CD4-positive, alpha-beta memory T cell (primary cell): ENCODE measurements at regions of chr16 and their contacts with region 1.

Region 1: GRCh38 chr16:30844671-30845449 is 49.0 kb downstream of the BCL7C start:
- DNase-seq: peak; percentile 82 to 88 (median 85)
- H3K4me3 ChIP-seq: peak overlapping the region in 1 of 2 donors; percentile 0
- H3K4me3 Mint-ChIP-seq: peak overlapping the region; percentile 31 to 72 (median 58)
- H3K27ac ChIP-seq: no peak overlapping the region
- H3K27ac Mint-ChIP-seq: peak overlapping the region in 6 of 7 donors; percentile 6 to 81 (median 74)
- H3K4me1 ChIP-seq: peaks cover 6% of the 10 kb centered on the region
- H3K4me1 Mint-ChIP-seq: peaks cover 6 to 11% (median 10%) of the 10 kb centered on the region in 4 donors
- H3K27me3 ChIP-seq: no peaks in the 10 kb centered on the region
- H3K27me3 Mint-ChIP-seq: no peaks in the 10 kb centered on the region

Region 2: GRCh38 chr16:30786936-30787612 is 57.8 kb before region 1 on chr16 and contains the start of gene ZNF629:
- CTCF ChIA-PET with region 1: no interaction called
- POLR2A ChIA-PET with region 1: no interaction called
- intact Hi-C with region 1: no loop called
- DNase-seq: peak in 1 of 5 donors; percentile 12
- H3K4me3 ChIP-seq: peak within 1 kb of the TSS; percentile 36 to 44
- H3K4me3 Mint-ChIP-seq: peak within 1 kb of the TSS; percentile 78 to 85 (median 80)
- H3K27ac ChIP-seq: no peak within 1 kb of the TSS
- H3K27ac Mint-ChIP-seq: peak within 1 kb of the TSS in 3 of 7 donors; percentile 23 to 70 (median 35)
- H3K4me1 ChIP-seq: peaks cover 10% of the 10 kb centered on the region
- H3K4me1 Mint-ChIP-seq: peaks cover 5 to 26% (median 17%) of the 10 kb centered on the region in 4 donors
- H3K27me3 ChIP-seq: peaks cover 5% of the 10 kb centered on the region
- H3K27me3 Mint-ChIP-seq: peaks cover 3 to 5% of the 10 kb centered on the region in 2 donors
- total RNA-seq, gene ZNF629: 4.7 to 5.4 TPM

Region 3: GRCh38 chr16:30813821-30814189 is 31.1 kb before region 1 on chr16:
- CTCF ChIA-PET with region 1: interaction called, 10 read pairs
- POLR2A ChIA-PET with region 1: interaction called, 7 read pairs
- intact Hi-C with region 1: no loop called
- DNase-seq: no peak
- H3K4me3 ChIP-seq: peak overlapping the region; percentile 61 to 64
- H3K4me3 Mint-ChIP-seq: peak overlapping the region; percentile 88 to 93 (median 89)
- H3K27ac ChIP-seq: peak overlapping the region; percentile 57
- H3K27ac Mint-ChIP-seq: peak overlapping the region; percentile 81 to 91 (median 90)
- H3K4me1 ChIP-seq: peaks cover 13% of the 10 kb centered on the region
- H3K4me1 Mint-ChIP-seq: peaks cover 8 to 17% (median 12%) of the 10 kb centered on the region in 4 donors
- H3K27me3 ChIP-seq: no peaks in the 10 kb centered on the region
- H3K27me3 Mint-ChIP-seq: no peaks in the 10 kb centered on the region

Region 4: GRCh38 chr16:30874821-30875717 is 30.2 kb after region 1 on chr16:
- CTCF ChIA-PET with region 1: interaction called, 19 read pairs
- POLR2A ChIA-PET with region 1: interaction called, 30 read pairs
- intact Hi-C with region 1: no loop called
- DNase-seq: peak; percentile 85 to 89 (median 87)
- H3K4me3 ChIP-seq: peak overlapping the region; percentile 89 to 94
- H3K4me3 Mint-ChIP-seq: peak overlapping the region; percentile 92 to 99 (median 97)
- H3K27ac ChIP-seq: peak overlapping the region; percentile 84
- H3K27ac Mint-ChIP-seq: peak overlapping the region; percentile 91 to 99 (median 94)
- H3K4me1 ChIP-seq: peaks cover 23% of the 10 kb centered on the region
- H3K4me1 Mint-ChIP-seq: peaks cover 16 to 50% (median 31%) of the 10 kb centered on the region in 4 donors
- H3K27me3 ChIP-seq: no peaks in the 10 kb centered on the region
- H3K27me3 Mint-ChIP-seq: no peaks in the 10 kb centered on the region

Region 5: DNA sequence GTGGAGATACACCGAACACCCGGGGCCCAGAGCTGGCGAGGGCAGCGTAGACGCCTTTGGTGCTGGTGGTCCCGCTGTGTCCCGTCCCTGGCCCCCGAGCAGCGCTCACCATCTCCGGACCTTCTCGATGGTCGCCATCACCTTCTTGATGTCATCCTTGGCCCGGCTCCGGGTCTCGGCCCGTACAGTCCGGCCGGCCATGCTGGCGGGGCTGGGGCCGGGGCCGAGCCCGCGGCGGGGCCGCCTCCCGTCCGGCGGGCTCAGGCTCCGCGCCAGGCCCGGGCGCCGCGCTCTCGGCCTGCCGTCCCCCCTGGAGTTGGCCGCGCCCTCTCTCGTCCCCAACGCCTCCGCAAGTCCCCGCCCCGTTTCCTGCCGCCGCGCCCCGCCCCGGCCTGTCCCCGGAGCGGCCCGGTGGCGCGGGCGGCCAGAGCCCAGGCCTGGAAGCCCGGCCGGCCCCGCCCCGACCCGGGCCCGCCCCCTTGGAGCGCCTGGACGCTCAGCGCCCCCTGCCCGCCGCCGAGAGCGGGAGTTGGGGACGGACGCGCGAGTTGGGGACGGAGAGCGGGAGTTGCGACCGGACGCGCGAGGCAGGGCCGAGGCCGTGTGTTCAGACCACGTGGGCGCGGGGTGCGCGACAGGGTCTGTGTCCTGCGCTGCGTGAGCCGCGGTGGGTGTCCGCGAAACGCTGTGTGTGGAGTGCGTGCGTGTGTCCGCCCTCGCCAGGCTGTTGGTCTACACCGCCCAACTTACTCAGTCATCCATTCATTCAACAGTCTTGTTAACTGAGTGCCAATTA is 49.1 kb after region 1 on chr16 and contains the start of gene BCL7C:
- CTCF ChIA-PET with region 1: interaction called, 124 read pairs
- POLR2A ChIA-PET with region 1: interaction called, 4 read pairs
- intact Hi-C with region 1: no loop called
- DNase-seq: peak; percentile 63 to 82 (median 67)
- H3K4me3 ChIP-seq: peak within 1 kb of the TSS; percentile 52 to 75
- H3K4me3 Mint-ChIP-seq: peak within 1 kb of the TSS; percentile 85 to 95 (median 90)
- H3K27ac ChIP-seq: peak within 1 kb of the TSS; percentile 79
- H3K27ac Mint-ChIP-seq: peak within 1 kb of the TSS; percentile 85 to 97 (median 93)
- H3K4me1 ChIP-seq: peaks cover 35% of the 10 kb centered on the region
- H3K4me1 Mint-ChIP-seq: peaks cover 29 to 55% (median 43%) of the 10 kb centered on the region in 4 donors
- H3K27me3 ChIP-seq: no peaks in the 10 kb centered on the region
- H3K27me3 Mint-ChIP-seq: no peaks in the 10 kb centered on the region
- total RNA-seq, gene BCL7C: 25.5 to 27.3 TPM

Region 6: DNA sequence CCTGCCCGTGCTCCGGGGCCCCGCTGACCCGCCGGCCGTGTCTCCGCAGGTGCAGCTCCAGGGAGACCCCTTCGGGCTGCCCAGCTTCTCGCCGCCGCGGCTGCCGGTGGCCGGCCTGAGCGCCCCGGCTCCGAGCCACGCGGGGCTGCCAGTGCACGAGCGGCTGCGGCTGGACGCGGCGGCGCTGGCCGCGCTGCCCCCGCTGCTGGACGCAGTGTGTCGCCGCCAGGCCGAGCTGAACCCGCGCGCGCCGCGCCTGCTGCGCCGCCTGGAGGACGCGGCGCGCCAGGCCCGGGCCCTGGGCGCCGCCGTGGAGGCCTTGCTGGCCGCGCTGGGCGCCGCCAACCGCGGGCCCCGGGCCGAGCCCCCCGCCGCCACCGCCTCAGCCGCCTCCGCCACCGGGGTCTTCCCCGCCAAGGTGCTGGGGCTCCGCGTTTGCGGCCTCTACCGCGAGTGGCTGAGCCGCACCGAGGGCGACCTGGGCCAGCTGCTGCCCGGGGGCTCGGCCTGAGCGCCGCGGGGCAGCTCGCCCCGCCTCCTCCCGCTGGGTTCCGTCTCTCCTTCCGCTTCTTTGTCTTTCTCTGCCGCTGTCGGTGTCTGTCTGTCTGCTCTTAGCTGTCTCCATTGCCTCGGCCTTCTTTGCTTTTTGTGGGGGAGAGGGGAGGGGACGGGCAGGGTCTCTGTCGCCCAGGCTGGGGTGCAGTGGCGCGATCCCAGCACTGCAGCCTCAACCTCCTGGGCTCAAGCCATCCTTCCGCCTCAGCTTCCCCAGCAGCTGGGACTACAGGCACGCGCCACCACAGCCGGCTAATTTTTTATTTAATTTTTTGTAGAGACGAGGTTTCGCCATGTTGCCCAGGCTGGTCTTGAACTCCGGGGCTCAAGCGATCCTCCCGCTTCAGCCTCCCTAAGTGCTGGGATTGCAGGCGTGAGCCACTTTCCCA is 57.4 kb after region 1 on chr16:
- CTCF ChIA-PET with region 1: interaction called, 124 read pairs
- POLR2A ChIA-PET with region 1: interaction called, 50 read pairs
- intact Hi-C with region 1: loop called (anchors 1 kb)
- DNase-seq: peak; percentile 54 to 72 (median 58)
- H3K4me3 ChIP-seq: peak overlapping the region in 1 of 2 donors; percentile 68
- H3K4me3 Mint-ChIP-seq: peak overlapping the region; percentile 94 to 99 (median 96)
- H3K27ac ChIP-seq: peak overlapping the region; percentile 70
- H3K27ac Mint-ChIP-seq: peak overlapping the region; percentile 91 to 99 (median 98)
- H3K4me1 ChIP-seq: peaks cover 41% of the 10 kb centered on the region
- H3K4me1 Mint-ChIP-seq: peaks cover 19 to 47% (median 32%) of the 10 kb centered on the region in 4 donors
- H3K27me3 ChIP-seq: no peaks in the 10 kb centered on the region
- H3K27me3 Mint-ChIP-seq: no peaks in the 10 kb centered on the region

Region 7: DNA sequence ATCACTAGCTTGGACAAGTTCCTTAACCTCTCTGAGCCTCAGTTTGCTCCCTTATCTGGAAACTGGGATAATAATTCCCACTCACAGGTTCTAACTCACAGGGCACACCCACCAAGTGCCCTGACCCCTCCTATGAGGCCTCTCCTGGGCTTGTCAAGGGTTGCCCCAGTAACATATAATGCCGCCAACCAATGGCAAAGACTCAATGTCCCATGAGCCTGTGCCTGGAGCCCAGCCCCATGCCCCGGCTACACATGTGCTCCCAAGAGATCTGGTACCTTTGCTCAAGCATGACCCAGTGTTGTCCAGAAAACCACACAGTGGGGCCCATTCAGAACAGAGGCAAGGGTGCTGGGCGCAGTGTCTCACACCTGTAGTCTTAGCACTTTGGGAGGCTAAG is 70.0 kb after region 1 on chr16:
- CTCF ChIA-PET with region 1: interaction called, 80 read pairs
- POLR2A ChIA-PET with region 1: interaction called, 7 read pairs
- intact Hi-C with region 1: no loop called
- DNase-seq: no peak
- H3K4me3 ChIP-seq: no peak overlapping the region
- H3K4me3 Mint-ChIP-seq: no peak overlapping the region
- H3K27ac ChIP-seq: no peak overlapping the region
- H3K27ac Mint-ChIP-seq: no peak overlapping the region
- H3K4me1 ChIP-seq: no peaks in the 10 kb centered on the region
- H3K4me1 Mint-ChIP-seq: no peaks in the 10 kb centered on the region
- H3K27me3 ChIP-seq: no peaks in the 10 kb centered on the region
- H3K27me3 Mint-ChIP-seq: no peaks in the 10 kb centered on the region

Region 8: DNA sequence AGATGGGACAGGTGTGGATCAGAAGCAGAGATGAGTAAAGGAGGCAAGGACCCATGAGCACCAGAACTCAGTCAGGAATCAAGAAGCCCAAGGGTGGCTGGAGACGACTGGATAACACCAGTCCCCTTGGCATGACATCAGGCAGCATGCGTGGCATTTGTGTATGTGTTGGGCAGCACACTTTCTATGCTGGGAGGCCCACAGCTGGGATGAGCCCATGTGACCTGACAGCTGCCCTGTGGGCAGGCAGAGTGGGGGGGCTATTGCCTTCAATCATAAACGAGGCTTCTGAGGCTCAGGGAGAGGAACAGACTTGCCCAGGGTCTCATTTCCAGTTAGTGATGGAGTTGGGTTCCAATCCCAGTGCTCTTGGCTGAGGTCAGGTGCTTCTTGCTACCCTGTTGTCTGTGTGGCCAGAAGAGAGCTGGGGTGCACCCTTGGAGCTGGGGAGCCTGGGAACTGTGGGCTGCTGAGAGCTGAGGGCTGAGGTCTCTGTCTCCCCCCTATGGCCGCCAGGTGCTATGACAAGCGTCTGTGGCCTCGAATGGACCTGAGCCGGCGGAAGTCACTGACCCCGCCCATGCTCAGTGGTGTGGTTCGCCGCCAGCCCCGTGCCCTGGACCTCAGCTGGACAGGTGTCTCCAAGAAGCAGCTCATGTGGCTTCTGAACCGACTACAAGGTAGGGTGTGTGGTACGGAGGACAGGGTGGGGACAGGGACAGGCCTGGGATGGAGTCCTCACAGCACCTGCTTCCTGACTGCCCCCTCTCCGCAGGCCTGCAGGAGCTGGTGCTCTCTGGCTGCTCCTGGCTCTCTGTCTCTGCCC is 97.0 kb after region 1 on chr16:
- CTCF ChIA-PET with region 1: interaction called, 70 read pairs
- POLR2A ChIA-PET with region 1: interaction called, 10 read pairs
- intact Hi-C with region 1: loop called (anchors 1 kb)
- DNase-seq: peak; percentile 46 to 60 (median 59)
- H3K4me3 ChIP-seq: peak overlapping the region in 1 of 2 donors; percentile 22
- H3K4me3 Mint-ChIP-seq: peak overlapping the region in 3 of 8 donors; percentile 15 to 29 (median 29)
- H3K27ac ChIP-seq: no peak overlapping the region
- H3K27ac Mint-ChIP-seq: peak overlapping the region in 4 of 7 donors; percentile 5 to 78 (median 49)
- H3K4me1 ChIP-seq: peaks cover 9% of the 10 kb centered on the region
- H3K4me1 Mint-ChIP-seq: peaks cover 9 to 24% (median 21%) of the 10 kb centered on the region in 4 donors
- H3K27me3 ChIP-seq: no peaks in the 10 kb centered on the region
- H3K27me3 Mint-ChIP-seq: no peaks in the 10 kb centered on the region